ENCODE measurements at regions of chr5 and their contacts with region 1.

Region 1: GRCh38 chr5:160418561-160419457 is at the start of gene SLU7:
- DNase-seq: peak; percentile 97
- ATAC-seq: peak; percentile 87
- H3K4me3 Mint-ChIP-seq: peak within 1 kb of the TSS; percentile 88
- H3K27ac Mint-ChIP-seq: peak within 1 kb of the TSS; percentile 93
- H3K4me1 Mint-ChIP-seq: peaks cover 50% of the 10 kb centered on the region
- H3K27me3 Mint-ChIP-seq: no peaks in the 10 kb centered on the region
- CTCF ChIP-seq: no peak
- total RNA-seq, gene SLU7: 38.4 to 40.9 TPM

Region 2: GRCh38 chr5:160119142-160119904 is 299.5 kb before region 1 on chr5 and contains the start of gene PWWP2A:
- CTCF ChIA-PET with region 1: no interaction called
- POLR2A ChIA-PET with region 1: no interaction called
- intact Hi-C with region 1: loop called (anchors 2 kb)
- DNase-seq: peak; percentile 98
- ATAC-seq: peak; percentile 95
- H3K4me3 Mint-ChIP-seq: peak within 1 kb of the TSS; percentile 83
- H3K27ac Mint-ChIP-seq: peak within 1 kb of the TSS; percentile 94
- H3K4me1 Mint-ChIP-seq: peaks cover 15% of the 10 kb centered on the region
- H3K27me3 Mint-ChIP-seq: no peaks in the 10 kb centered on the region
- CTCF ChIP-seq: no peak
- total RNA-seq, gene PWWP2A: 16.0 to 17.5 TPM